ENCODE measurements at regions of chr19 and their contacts with region 1.

Region 1: GRCh38 chr19:55516878-55517620 is 19.9 kb downstream of the SBK2 start:
- DNase-seq: peak; percentile 88
- H3K4me3 Mint-ChIP-seq: peak overlapping the region; percentile 66
- H3K27ac Mint-ChIP-seq: peak overlapping the region; percentile 68
- H3K4me1 Mint-ChIP-seq: no peaks in the 10 kb centered on the region
- H3K27me3 Mint-ChIP-seq: peaks cover 2% of the 10 kb centered on the region

Region 2: DNA sequence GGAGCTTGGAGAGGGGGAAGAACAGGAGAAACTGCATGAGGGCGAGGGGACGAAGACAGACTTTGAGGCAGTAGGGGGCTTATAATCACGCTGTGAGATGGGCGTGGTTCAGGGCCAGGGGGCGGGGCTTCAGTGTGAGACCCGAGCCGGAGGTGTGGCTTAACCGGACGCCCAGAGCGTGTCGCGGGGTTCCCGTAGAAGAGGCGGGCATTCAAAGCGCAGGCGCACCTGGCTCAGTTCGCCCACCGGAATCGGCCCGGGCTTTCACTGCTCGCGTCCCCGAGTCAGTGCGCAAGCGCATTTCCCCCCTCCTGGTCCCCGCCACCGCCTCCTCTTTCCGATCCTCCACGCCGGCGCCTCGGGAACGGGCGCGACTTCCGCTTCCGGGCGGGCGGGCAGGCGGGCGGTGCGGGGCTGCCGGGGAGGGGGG is 88.2 kb after region 1 on chr19:
- intact Hi-C with region 1: loop called (anchors 1 kb)
- DNase-seq: peak; percentile 98
- H3K4me3 Mint-ChIP-seq: peak overlapping the region; percentile 86
- H3K27ac Mint-ChIP-seq: peak overlapping the region; percentile 95
- H3K4me1 Mint-ChIP-seq: peaks cover 45% of the 10 kb centered on the region
- H3K27me3 Mint-ChIP-seq: no peaks in the 10 kb centered on the region

Measured in activated T-helper 1 cell treated with anti-CD3 and anti-CD28 coated beads, Interleukin-12 subunit alpha, Interleukin-12 subunit beta, Interleukin-2, Interleukin-4 antibody, amounts not matched to agents 30 ng/mL and 10 ng/mL and 1 ng/mL, durations not matched to agents 14 hours and 24 hours and 36 hours (primary cell).